ENCODE measurements at regions of chr13 and their contacts with region 1.

Region 1: DNA sequence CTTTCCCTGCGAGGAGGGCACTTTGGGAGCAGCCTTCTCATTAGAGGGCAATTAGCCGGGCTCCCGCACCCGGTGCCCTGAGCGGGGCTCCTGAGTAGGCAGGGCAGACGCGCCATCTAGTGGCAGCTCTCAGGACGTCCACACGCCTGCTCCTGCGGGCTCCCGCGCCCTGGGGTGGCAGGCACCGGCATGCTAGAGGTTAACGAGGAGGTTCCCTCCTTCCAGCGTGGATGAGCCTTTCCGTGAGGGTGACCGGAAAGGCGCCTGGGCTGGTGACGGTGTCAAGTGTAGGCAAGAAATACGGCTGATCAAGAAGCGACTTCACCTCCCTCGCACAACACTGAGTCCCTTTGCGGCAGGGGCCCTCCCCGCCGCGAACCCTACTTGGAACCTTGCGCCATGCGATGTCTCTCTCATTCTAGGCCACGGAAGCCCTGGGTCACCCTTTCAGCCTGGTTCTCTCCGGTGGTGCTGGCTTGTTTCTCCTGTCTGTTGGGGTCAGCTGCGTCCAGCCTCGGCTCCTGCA is 67.7 kb downstream of the ALOX5AP start:
- DNase-seq: peak; percentile 79 to 95 (median 90)
- H3K4me3 ChIP-seq: peak overlapping the region in 58 of 59 donors; percentile 20 to 71 (median 53)
- H3K27ac ChIP-seq: peak overlapping the region in 31 of 59 donors; percentile 5 to 78 (median 40)
- H3K27me3 ChIP-seq: no peaks in the 10 kb centered on the region
- CTCF ChIP-seq: peak; percentile 47 to 99 (median 96)

Region 2: DNA sequence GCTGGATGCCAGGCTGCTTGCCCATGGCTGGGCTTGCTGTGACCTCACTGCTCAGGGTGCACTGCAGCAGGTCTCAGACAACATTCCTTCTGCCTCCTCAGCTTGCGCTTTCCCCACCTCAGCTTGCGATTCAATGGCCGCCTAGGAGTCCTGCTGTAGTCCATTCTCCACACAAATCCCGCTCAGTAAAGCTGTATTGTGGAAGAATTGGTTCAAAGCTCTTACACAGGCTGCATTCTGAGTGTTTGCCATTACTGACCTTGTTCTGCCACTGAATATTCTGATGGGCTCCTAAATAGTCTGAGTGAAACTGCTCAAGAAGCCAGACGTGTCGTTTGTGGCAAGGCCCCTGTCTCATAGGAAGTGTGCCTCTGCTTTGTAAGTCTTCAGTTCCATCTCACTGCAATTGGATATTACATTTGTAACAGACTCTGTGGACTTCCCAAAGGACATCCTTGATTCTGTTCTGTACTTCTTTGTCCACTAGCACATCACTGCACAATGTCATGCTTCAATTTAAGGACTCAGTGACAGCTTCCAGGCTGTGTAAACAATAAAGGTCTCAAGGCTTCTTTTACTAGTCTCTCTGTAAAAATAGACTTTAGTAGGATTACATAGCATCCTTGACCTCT is 545.4 kb before region 1 on chr13:
- intact Hi-C with region 1: loop called in 1 of 2 experiments (anchors 10 kb)
- DNase-seq: peak in 3 of 10 donors; percentile 33 to 64 (median 51)
- H3K4me3 ChIP-seq: peak overlapping the region in 8 of 59 donors; percentile 0 to 31 (median 12)
- H3K27ac ChIP-seq: peak overlapping the region in 53 of 59 donors; percentile 3 to 80 (median 64)
- H3K27me3 ChIP-seq: no peaks in the 10 kb centered on the region
- CTCF ChIP-seq: no peak

Region 3: GRCh38 chr13:30408319-30409101 is 394.5 kb before region 1 on chr13:
- intact Hi-C with region 1: loop called (anchors 5 kb)
- DNase-seq: peak; percentile 85 to 92 (median 90)
- H3K4me3 ChIP-seq: peak overlapping the region; percentile 27 to 71 (median 56)
- H3K27ac ChIP-seq: peak overlapping the region; percentile 1 to 93 (median 82)
- H3K27me3 ChIP-seq: no peaks in the 10 kb centered on the region
- CTCF ChIP-seq: peak; percentile 44 to 91 (median 77)

Region 4: DNA sequence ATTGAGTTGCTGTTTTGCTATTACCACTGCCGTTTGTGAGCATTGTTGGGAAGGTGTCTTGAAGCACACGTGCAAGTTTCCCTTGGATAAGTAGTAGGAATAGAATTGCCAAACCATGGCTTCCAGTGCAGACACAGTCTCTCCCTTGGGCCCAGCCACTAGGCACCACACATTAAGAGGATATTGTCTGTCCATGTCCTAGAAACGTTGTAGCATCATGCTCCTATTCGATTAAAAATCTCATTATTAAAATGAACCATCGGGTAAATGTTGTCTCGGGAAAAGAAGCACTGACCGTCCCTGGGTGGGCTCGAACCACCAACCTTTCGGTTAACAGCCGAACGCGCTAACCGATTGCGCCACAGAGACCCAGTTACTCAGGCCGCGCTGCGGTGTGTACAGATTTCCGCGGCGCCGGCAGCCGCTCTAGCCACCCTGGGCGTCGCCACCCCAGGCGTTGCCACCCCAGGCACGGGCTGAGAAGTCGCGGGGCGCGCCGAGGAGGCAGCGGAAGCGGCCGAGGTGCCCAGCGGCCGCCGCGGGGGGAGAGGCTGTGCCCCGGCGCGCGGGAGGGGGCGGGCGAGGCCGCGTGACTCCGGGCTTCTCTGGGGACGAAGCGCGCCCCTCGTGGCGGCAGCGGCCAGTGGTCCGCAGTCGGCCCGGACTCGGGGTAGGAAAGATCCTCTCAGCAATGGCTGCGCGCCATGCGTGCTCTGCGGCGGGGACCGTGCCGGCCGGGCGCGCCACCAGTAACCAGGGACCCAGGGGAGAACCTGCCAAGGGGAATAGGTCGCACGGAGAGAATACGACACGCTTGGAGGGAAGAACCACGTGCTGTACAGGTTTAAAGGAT is 129.1 kb before region 1 on chr13:
- intact Hi-C with region 1: loop called (anchors 5 kb)
- DNase-seq: peak; percentile 74 to 90 (median 86)
- H3K4me3 ChIP-seq: peak overlapping the region; percentile 33 to 77 (median 61)
- H3K27ac ChIP-seq: peak overlapping the region; percentile 27 to 91 (median 83)
- H3K27me3 ChIP-seq: no peaks in the 10 kb centered on the region
- CTCF ChIP-seq: peak; percentile 32 to 94 (median 76)

Region 5: DNA sequence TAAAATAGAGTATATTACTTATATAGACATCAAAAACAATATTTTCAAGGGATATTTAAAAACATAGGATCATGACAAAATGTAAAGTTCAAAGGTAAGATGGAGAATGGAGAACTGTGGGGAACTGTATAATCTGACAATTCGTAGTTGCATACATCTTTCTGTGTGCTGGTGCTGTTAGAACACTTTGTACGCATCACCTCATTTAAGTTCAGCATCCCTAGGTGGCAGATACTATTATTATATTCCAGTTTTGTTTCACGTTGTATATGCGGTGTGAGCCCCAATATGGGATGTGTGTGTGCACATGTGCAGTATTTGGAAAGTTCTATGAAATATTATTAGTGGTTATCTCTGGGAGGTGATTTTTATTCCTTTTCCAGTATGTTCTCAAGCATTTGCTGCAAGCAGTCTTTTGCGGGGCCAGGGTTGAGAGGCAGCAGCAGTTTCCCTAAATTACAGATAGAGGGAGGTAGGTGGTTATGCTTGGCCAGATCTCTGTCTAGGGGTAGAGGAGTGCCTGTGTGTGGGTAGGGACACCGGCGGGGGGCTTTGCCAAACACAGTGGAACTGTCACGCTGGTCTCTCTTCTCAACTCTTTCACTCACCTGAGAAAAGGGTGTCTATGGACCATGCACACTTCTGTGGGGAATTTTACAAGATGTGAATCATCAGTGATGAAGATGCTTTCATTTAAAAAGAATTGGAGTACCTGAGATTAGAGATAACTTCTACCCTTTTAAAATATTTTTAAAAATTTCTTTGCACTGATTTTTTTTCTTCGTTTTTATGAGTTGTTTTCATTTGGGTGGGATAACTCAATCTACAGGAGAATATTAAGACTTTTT is 123.3 kb before region 1 on chr13:
- intact Hi-C with region 1: loop called (anchors 5 kb)
- DNase-seq: peak in 3 of 10 donors; percentile 39 to 49 (median 40)
- H3K4me3 ChIP-seq: peak overlapping the region in 2 of 59 donors; percentile 15 to 24
- H3K27ac ChIP-seq: peak overlapping the region in 20 of 59 donors; percentile 0 to 66 (median 29)
- H3K27me3 ChIP-seq: no peaks in the 10 kb centered on the region
- CTCF ChIP-seq: peak in 55 of 56 donors; percentile 33 to 77 (median 59)

Region 6: GRCh38 chr13:30832845-30833332 is 29.9 kb after region 1 on chr13:
- intact Hi-C with region 1: no loop called
- DNase-seq: peak in 5 of 10 donors; percentile 28 to 56 (median 37)
- H3K4me3 ChIP-seq: no peak overlapping the region
- H3K27ac ChIP-seq: peak overlapping the region in 2 of 59 donors; percentile 17 to 65
- H3K27me3 ChIP-seq: no peaks in the 10 kb centered on the region
- CTCF ChIP-seq: no peak

Region 7: GRCh38 chr13:30865123-30866049 is 62.4 kb after region 1 on chr13:
- intact Hi-C with region 1: loop called (anchors 2 to 5 kb)
- DNase-seq: peak; percentile 57 to 88 (median 84)
- H3K4me3 ChIP-seq: peak overlapping the region in 5 of 59 donors; percentile 2 to 15 (median 5)
- H3K27ac ChIP-seq: peak overlapping the region in 56 of 59 donors; percentile 6 to 91 (median 76)
- H3K27me3 ChIP-seq: no peaks in the 10 kb centered on the region
- CTCF ChIP-seq: peak; percentile 76 to 96 (median 90)

Region 8: GRCh38 chr13:31044377-31045285 is 241.6 kb after region 1 on chr13:
- intact Hi-C with region 1: loop called (anchors 5 kb)
- DNase-seq: peak; percentile 70 to 88 (median 84)
- H3K4me3 ChIP-seq: no peak overlapping the region
- H3K27ac ChIP-seq: peak overlapping the region in 3 of 59 donors; percentile 14 to 38 (median 24)
- H3K27me3 ChIP-seq: peaks cover 0 to 5% (median 0%) of the 10 kb centered on the region in 45 donors
- CTCF ChIP-seq: peak; percentile 90 to 98 (median 96)

Measured in dorsolateral prefrontal cortex (tissue), 120 donors.